Heart left ventricle (tissue), 16 donors: ENCODE measurements at regions of chr3 and their contacts with region 1.

Region 1: GRCh38 chr3:74643636-74644035 is 29.2 kb upstream of the CNTN3 start:
- DNase-seq: peak; percentile 51 to 86 (median 69)
- ATAC-seq: peak; percentile 100
- H3K4me3 ChIP-seq: no peak overlapping the region
- H3K27ac ChIP-seq: peak overlapping the region; percentile 36 to 89 (median 78)
- H3K4me1 ChIP-seq: peaks cover 0 to 19% (median 3%) of the 10 kb centered on the region in 12 donors
- H3K27me3 ChIP-seq: no peaks in the 10 kb centered on the region
- CTCF ChIP-seq: no peak
- POLR2A ChIP-seq: no peak

Region 2: GRCh38 chr3:74027121-74027520 is 616.5 kb before region 1 on chr3:
- intact Hi-C with region 1: no loop called
- DNase-seq: no peak
- ATAC-seq: no peak
- H3K4me3 ChIP-seq: no peak overlapping the region
- H3K27ac ChIP-seq: no peak overlapping the region
- H3K4me1 ChIP-seq: no peaks in the 10 kb centered on the region
- H3K27me3 ChIP-seq: no peaks in the 10 kb centered on the region
- CTCF ChIP-seq: no peak
- POLR2A ChIP-seq: no peak

Region 3: DNA sequence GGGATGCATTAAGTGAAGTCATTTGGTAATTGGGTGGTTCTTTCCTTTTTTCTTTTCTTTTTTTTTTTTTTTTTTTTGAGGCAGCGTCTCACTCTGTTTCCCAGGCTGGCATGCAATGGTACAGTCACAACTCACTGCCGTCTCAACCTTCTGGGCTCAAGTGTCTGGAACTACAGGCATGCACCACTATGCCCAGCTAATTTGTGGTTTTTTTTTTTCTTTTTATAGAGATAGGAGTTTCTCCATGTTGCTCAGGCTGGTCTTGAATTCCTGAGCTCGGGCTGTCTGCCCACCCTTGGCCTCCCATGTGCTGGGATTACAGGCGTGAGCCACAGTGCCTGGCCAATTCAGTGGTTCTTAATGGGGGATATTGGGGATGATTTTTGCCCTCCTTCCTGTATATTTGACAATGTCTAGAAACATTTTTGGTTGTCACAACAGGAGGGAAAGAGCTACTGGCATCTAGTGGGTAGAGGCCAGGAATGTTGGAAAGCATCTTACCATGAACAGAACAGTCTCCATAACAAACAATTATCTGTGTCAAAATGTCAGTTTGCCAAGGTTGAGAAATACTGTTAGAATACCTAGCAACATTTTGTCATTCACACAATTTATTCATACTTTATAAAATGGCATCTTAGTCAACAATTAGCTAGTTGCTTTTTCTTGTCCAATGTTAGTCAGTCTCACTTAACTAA is 50.2 kb after region 1 on chr3:
- intact Hi-C with region 1: loop called in 1 of 10 experiments (anchors 5 kb)
- DNase-seq: no peak
- ATAC-seq: peak; percentile 38 to 90 (median 68)
- H3K4me3 ChIP-seq: no peak overlapping the region
- H3K27ac ChIP-seq: peak overlapping the region in 2 of 12 donors; percentile 52 to 59
- H3K4me1 ChIP-seq: peaks cover 0 to 5% (median 0%) of the 10 kb centered on the region in 12 donors
- H3K27me3 ChIP-seq: no peaks in the 10 kb centered on the region
- CTCF ChIP-seq: no peak
- POLR2A ChIP-seq: no peak

Region 4: GRCh38 chr3:74739242-74739641 is 95.6 kb after region 1 on chr3:
- intact Hi-C with region 1: loop called in 1 of 10 experiments (anchors 10 kb)
- DNase-seq: no peak
- ATAC-seq: peak in 3 of 4 donors; percentile 50 to 76 (median 70)
- H3K4me3 ChIP-seq: no peak overlapping the region
- H3K27ac ChIP-seq: peak overlapping the region in 2 of 12 donors; percentile 2
- H3K4me1 ChIP-seq: peaks cover 0 to 2% (median 0%) of the 10 kb centered on the region in 12 donors
- H3K27me3 ChIP-seq: no peaks in the 10 kb centered on the region
- CTCF ChIP-seq: no peak
- POLR2A ChIP-seq: no peak